Caco-2 (cell line): ENCODE measurements at regions of chr9 and their contacts with region 1.

Region 1: DNA sequence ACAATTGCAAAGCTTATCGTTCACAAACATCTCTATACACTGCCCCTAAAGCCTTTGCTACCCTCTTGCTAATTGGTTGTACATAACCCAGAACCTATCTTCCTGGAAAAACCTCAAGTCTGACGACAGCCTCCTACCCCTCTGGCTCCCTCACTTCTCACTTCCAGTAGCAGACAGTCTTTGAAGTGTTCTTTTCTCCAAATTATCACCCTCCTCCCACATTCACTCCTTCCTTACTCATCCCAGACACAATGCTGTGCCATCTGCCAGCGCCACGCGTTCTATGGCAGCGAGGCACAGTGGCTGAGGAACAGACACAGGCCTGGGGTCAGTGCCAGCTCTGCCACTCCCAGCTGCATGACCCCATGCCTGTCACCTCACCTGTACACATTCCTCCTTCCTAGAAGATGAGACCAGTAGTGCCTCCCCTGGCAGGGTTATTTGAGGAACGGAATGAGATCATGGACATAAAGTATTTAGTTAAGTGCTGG is 27.7 kb downstream of the CLTA start:
- DNase-seq: no peak
- H3K4me3 ChIP-seq: no peak overlapping the region
- H3K4me3 Mint-ChIP-seq: no peak overlapping the region
- H3K27ac Mint-ChIP-seq: no peak overlapping the region
- H3K4me1 ChIP-seq: no peaks in the 10 kb centered on the region
- H3K4me1 Mint-ChIP-seq: peaks cover 4% of the 10 kb centered on the region
- H3K27me3 ChIP-seq: no peaks in the 10 kb centered on the region
- H3K27me3 Mint-ChIP-seq: no peaks in the 10 kb centered on the region
- CTCF ChIP-seq: no peak

Region 2: DNA sequence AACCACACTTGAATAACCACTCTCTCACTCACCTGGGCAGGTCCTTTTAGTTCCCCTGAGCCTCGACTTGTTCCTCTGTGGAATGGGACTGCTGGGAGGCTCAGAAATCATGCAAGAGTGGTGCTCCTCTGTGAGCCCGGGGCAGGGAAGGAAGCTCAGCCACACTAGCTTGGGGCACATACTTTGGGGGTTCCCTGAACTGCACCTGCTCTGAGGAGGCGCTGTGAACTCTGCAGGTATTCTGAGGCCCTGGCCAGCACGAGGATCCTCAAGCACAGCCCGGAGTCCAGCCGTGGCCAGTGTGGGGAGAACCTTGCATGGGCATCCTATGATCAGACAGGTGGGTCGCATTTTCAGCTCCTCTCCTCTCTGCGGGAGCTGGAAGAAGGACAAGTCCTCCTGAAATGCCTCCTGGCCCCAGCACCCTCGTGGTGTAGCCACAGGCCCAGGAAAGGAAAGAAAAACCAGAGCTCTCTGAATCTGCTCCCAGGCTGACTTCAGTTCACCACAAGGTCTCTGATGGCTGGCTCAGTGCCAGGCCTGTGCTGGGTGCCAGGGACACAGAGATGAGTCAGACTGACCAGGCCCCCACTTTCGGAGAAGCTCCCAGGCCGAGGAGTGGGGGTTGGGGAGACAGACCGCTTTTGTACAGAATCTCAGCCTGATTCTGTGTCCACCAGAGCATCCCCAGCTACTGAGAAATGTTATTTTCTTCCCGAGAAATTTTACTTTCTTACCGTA is 70.0 kb before region 1 on chr9:
- CTCF ChIA-PET with region 1: no interaction called
- POLR2A ChIA-PET with region 1: no interaction called
- intact Hi-C with region 1: no loop called
- DNase-seq: no peak
- H3K4me3 ChIP-seq: no peak overlapping the region
- H3K4me3 Mint-ChIP-seq: no peak overlapping the region
- H3K27ac Mint-ChIP-seq: no peak overlapping the region
- H3K4me1 ChIP-seq: no peaks in the 10 kb centered on the region
- H3K4me1 Mint-ChIP-seq: no peaks in the 10 kb centered on the region
- H3K27me3 ChIP-seq: no peaks in the 10 kb centered on the region
- H3K27me3 Mint-ChIP-seq: no peaks in the 10 kb centered on the region
- CTCF ChIP-seq: no peak

Region 3: DNA sequence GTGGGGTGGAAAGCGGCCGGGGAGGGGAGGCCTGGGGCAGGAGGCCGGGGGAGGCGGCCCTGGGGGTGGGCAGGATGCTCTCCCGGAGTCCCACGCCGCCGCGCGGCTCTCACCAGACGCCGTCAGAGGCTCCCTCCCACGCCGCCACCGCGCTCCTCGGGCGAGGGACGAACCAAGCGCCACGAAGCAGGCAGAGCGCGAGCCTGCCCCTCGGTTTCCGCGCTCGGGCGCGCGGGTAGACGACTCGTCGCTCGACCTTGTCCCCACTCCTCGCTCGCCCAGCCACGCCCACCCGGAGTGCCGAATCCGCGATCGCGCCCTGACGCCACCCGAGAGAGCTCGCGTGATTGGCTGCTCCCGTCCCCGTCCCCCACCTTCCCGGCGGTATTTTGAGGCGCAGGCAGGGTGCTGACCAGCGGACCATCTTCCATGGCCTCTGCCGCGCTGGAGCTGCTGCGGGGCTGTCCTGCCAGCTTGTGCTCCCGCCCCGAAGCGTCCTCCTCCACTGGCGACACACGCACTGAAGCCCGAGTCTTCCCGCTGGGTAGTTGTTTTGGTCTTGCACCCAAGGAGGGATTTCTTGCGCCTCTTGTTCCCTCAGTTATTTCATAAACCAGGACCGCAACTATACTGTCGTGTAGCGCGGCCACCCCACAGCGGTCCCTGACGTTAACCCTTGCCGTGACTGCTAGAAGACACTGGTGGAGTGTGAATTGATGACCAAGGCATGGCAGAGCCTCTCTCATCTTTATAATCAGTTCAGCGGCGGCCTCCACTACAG is 39.9 kb after region 1 on chr9 and contains the start of gene GNE:
- CTCF ChIA-PET with region 1: no interaction called
- POLR2A ChIA-PET with region 1: interaction called, 11 read pairs
- intact Hi-C with region 1: no loop called
- DNase-seq: peak; percentile 96
- H3K4me3 ChIP-seq: peak within 1 kb of the TSS; percentile 78
- H3K4me3 Mint-ChIP-seq: peak within 1 kb of the TSS; percentile 91
- H3K27ac Mint-ChIP-seq: peak within 1 kb of the TSS; percentile 90
- H3K4me1 ChIP-seq: no peaks in the 10 kb centered on the region
- H3K4me1 Mint-ChIP-seq: no peaks in the 10 kb centered on the region
- H3K27me3 ChIP-seq: no peaks in the 10 kb centered on the region
- H3K27me3 Mint-ChIP-seq: no peaks in the 10 kb centered on the region
- CTCF ChIP-seq: no peak
- total RNA-seq, gene GNE: 15.2 and 18.7 TPM in 2 replicates